Activated CD4-positive, alpha-beta T cell treated with anti-CD3 and anti-CD28 coated beads for 36 hours (primary cell): ENCODE measurements at regions of chr10 and their contacts with region 1.

Region 1: DNA sequence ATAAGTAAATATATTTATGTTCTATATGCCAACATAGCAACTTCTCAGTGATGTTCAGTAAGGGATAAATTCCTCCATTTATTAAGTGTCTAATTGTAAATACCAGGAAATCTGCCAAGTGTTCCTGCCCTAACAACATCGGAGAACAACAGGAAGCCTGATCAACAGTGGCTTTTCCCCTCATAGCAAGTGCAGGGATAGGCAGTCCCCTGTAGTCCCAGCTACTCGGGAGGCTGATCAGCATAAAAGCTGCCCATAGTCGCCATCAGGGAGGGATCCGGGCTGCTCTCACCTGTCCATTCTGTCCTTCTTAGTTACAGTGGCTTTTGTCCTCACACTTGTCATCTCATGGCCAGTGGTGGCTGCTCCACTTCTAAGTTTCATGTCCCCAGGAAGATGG is 141.3 kb downstream of the IDE start:
- DNase-seq: no peak
- ATAC-seq: no peak
- H3K4me3 Mint-ChIP-seq: no peak overlapping the region
- H3K27ac Mint-ChIP-seq: no peak overlapping the region
- H3K4me1 Mint-ChIP-seq: no peaks in the 10 kb centered on the region
- H3K27me3 Mint-ChIP-seq: no peaks in the 10 kb centered on the region

Region 2: GRCh38 chr10:92087750-92088395 is 344.7 kb before region 1 on chr10:
- CTCF ChIA-PET with region 1: interaction called, 14 read pairs
- POLR2A ChIA-PET with region 1: no interaction called
- intact Hi-C with region 1: loop called (anchors 1 kb)
- DNase-seq: peak; percentile 73
- ATAC-seq: peak; percentile 99
- H3K4me3 Mint-ChIP-seq: no peak overlapping the region
- H3K27ac Mint-ChIP-seq: no peak overlapping the region
- H3K4me1 Mint-ChIP-seq: peaks cover 5% of the 10 kb centered on the region
- H3K27me3 Mint-ChIP-seq: no peaks in the 10 kb centered on the region

Region 3: DNA sequence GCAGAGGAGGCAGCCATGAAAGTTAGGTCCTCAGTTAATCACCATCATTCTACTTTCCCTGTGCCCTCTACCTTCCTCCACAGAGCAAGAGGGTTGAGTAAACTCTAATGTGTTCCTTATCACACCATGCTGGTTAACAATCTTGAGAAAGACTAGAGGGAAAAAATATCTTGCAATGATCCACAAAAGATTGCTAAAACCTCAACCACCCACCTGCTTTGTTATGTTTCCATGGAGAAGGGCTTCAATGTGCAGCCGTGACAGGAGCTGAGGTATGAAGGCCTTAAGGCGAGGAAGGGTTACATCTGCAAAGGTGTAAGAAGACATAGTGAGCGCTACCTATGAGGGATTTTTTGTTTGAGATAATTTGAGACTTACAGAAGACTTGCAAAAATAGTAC is 37.4 kb after region 1 on chr10:
- CTCF ChIA-PET with region 1: no interaction called
- POLR2A ChIA-PET with region 1: no interaction called
- intact Hi-C with region 1: no loop called
- DNase-seq: no peak
- ATAC-seq: no peak
- H3K4me3 Mint-ChIP-seq: no peak overlapping the region
- H3K27ac Mint-ChIP-seq: no peak overlapping the region
- H3K4me1 Mint-ChIP-seq: no peaks in the 10 kb centered on the region
- H3K27me3 Mint-ChIP-seq: no peaks in the 10 kb centered on the region